Sigmoid colon (tissue), 7 donors: ENCODE measurements at regions of chr16 and their contacts with region 1.

Region 1: DNA sequence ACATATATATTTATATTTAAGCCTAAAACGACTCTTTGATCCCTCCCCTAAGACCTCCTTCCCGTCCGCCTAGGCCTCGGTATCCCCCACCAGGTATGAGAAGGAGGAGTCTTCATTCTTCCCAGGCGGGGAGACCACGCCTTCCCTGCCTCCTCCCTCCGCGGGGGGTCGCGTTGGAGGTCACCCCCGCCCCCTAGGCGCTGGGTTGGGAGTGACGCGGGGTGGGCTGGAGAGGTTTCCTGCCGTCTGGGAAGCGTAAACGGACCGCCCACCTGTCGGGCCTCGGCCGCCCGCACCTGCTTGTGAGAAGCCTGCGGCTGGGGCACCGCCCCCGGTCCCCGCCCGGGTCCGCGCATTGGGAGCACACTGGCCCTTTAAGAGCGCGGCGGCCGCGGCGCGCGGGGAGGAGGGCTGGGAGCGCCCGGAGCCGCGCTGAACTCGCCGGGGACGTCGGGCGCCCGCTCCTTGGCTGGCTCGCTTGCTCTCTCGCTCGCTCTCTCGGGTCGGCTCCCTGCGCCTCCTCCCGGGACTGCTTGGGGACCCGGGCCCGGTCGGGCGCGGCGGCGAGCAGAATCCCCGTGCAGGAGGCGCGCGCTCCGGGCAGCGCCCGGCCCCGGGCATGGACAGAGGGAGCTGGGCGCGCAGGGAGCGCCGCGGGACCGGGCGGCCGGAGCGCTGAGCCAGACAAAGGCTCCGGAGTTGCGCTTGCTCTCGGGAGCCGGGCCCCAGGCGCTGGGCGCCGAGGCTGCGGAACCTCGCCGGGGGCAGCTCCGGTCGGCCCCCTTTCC is at the start of gene MMP15:
- DNase-seq: peak; percentile 80
- H3K4me3 ChIP-seq: peak within 1 kb of the TSS; percentile 51 to 89 (median 70)
- H3K27ac ChIP-seq: peak within 1 kb of the TSS; percentile 86 to 91 (median 89)
- H3K4me1 ChIP-seq: peaks cover 1 to 74% (median 64%) of the 10 kb centered on the region in 4 donors
- H3K27me3 ChIP-seq: no peaks in the 10 kb centered on the region
- CTCF ChIP-seq: no peak
- EP300 ChIP-seq: no peak
- POLR2A ChIP-seq: no peak
- total RNA-seq, gene MMP15: 2.3 to 10.5 (median 5.1) TPM

Region 2: DNA sequence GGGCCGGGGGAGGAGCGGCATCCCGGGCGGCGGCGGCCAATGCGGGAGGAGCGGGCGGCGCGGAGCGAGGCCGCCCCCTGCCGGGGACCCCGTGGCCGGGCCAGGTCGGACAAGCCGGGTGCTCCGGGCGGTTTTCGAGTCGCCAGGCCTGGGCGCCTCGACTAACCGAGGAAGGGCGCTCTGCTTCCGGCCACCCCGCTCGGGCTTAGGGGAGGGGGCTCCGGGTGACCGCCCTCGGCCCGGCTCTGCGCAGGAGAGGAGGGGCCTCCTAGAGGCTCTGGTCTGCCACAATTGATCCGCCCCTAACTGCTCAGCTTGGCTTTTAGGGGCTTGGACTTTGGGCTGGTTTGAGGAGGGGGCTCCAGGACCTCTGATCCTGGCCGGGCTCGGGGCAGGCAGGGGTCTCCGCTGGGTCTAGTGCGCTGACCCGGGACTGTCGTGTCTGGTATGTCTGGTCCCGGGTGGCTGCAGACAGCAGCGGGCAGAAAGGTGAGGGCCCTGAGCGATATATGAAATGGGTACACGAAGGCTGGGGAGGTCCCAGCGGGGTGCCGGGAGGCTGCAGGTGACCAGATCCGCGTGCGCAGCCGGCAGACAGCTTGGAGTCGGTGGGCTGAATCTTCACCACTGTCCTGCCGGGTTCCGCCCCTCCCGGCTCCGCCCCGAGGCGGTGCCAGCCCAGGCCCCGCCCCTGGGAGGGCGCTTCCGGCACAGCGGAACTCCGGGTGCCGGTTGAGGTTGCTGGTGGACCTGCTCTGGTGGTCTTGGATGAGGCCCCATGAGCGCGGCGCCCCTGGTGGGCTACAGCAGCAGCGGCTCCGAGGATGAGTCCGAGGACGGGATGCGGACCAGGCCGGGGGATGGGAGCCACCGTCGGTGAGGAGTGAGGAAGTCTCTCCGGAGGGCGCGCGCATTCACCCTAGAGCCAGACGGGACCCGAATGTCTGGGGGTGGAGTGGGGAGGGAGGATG is 24.6 kb before region 1 on chr16 and contains the start of gene USB1:
- intact Hi-C with region 1: loop called (anchors 1 kb)
- DNase-seq: peak; percentile 92
- H3K4me3 ChIP-seq: peak within 1 kb of the TSS; percentile 48 to 91 (median 82)
- H3K27ac ChIP-seq: peak within 1 kb of the TSS; percentile 93 to 98 (median 96)
- H3K4me1 ChIP-seq: peaks cover 0 to 45% (median 30%) of the 10 kb centered on the region in 4 donors
- H3K27me3 ChIP-seq: no peaks in the 10 kb centered on the region
- CTCF ChIP-seq: peak in 3 of 4 experiments; percentile 22 to 63 (median 58)
- EP300 ChIP-seq: no peak
- POLR2A ChIP-seq: peak; percentile 69 to 79
- total RNA-seq, gene USB1: 19.9 to 44.9 (median 34.9) TPM

Region 3: GRCh38 chr16:58121132-58121531 is 95.6 kb after region 1 on chr16:
- intact Hi-C with region 1: loop called (anchors 2 kb)
- DNase-seq: no peak
- H3K4me3 ChIP-seq: no peak overlapping the region
- H3K27ac ChIP-seq: peak overlapping the region in 3 of 4 donors; percentile 19 to 67 (median 52)
- H3K4me1 ChIP-seq: peaks cover 0 to 94% (median 77%) of the 10 kb centered on the region in 4 donors
- H3K27me3 ChIP-seq: no peaks in the 10 kb centered on the region
- CTCF ChIP-seq: no peak
- EP300 ChIP-seq: no peak
- POLR2A ChIP-seq: no peak

Region 4: GRCh38 chr16:58129097-58129936 is 103.8 kb after region 1 on chr16 and contains the start of gene CFAP20:
- intact Hi-C with region 1: loop called (anchors 2 kb)
- DNase-seq: peak; percentile 99
- H3K4me3 ChIP-seq: peak within 1 kb of the TSS; percentile 73 to 92 (median 84)
- H3K27ac ChIP-seq: peak within 1 kb of the TSS; percentile 89 to 95 (median 92)
- H3K4me1 ChIP-seq: peaks cover 0 to 41% (median 39%) of the 10 kb centered on the region in 4 donors
- H3K27me3 ChIP-seq: no peaks in the 10 kb centered on the region
- CTCF ChIP-seq: no peak
- EP300 ChIP-seq: peak in 2 of 4 donors; percentile 52 to 73
- POLR2A ChIP-seq: peak; percentile 86 to 88
- total RNA-seq, gene CFAP20: 11.9 to 42.5 (median 26.6) TPM

Region 5: GRCh38 chr16:58198022-58198683 is 172.6 kb after region 1 on chr16 and contains the start of gene CSNK2A2:
- intact Hi-C with region 1: loop called (anchors 1 kb)
- DNase-seq: peak; percentile 79
- H3K4me3 ChIP-seq: peak within 1 kb of the TSS; percentile 67 to 92 (median 84)
- H3K27ac ChIP-seq: peak within 1 kb of the TSS; percentile 45 to 59 (median 57)
- H3K4me1 ChIP-seq: peaks cover 0 to 31% (median 18%) of the 10 kb centered on the region in 4 donors
- H3K27me3 ChIP-seq: no peaks in the 10 kb centered on the region
- CTCF ChIP-seq: peak in 1 of 4 experiments; percentile 24
- EP300 ChIP-seq: no peak
- POLR2A ChIP-seq: no peak
- total RNA-seq, gene CSNK2A2: 29.5 to 79.8 (median 33.0) TPM

Region 6: GRCh38 chr16:58249780-58250478 is 224.4 kb after region 1 on chr16:
- intact Hi-C with region 1: no loop called
- DNase-seq: peak; percentile 82
- H3K4me3 ChIP-seq: peak overlapping the region; percentile 46 to 70 (median 58)
- H3K27ac ChIP-seq: peak overlapping the region; percentile 39 to 67 (median 62)
- H3K4me1 ChIP-seq: peaks cover 0 to 16% (median 6%) of the 10 kb centered on the region in 4 donors
- H3K27me3 ChIP-seq: no peaks in the 10 kb centered on the region
- CTCF ChIP-seq: no peak
- EP300 ChIP-seq: no peak
- POLR2A ChIP-seq: no peak

Region 7: DNA sequence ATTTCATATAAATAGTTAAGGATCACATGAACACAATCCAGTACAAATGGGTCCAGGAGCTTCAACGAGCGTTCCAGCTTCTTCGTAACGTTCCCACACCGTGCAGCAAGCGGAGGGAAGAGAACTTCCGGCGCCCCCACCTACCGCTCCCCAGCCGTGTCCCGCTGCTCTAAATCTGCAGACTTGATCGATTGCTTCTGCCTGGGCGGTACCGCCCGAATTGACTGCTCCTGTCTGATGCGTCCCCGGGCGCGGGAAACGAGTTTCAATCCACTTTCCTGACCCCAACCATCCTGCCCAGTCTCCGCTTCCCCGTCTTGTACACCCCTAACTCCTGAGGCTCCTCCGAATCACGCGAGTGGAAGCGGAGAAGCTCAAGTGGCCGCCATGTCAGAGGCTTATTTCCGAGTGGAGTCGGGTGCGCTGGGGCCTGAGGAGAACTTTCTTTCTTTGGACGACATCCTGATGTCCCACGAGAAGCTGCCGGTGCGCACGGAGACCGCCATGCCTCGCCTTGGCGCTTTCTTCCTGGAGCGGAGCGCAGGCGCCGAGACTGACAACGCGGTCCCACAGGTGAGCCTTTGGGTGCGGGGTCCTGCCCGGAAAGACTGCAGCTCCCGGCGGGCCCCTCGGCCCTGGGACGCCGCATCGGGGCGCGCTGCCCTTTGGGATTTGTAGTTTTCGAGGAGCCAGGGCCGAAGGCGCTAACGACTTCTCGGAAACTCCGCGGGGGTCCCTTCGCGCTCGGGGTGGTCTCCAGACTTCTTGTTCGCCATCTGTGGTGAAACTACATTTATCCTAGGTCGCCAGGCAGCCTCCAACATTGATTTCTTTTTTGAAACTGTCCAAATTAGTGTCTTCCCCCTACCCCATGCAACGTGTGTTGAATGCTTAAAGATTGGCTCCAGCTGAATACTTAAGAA is 366.9 kb after region 1 on chr16 and contains the start of gene GINS3:
- intact Hi-C with region 1: loop called (anchors 10 kb)
- DNase-seq: peak; percentile 92
- H3K4me3 ChIP-seq: peak within 1 kb of the TSS; percentile 72 to 96 (median 82)
- H3K27ac ChIP-seq: peak within 1 kb of the TSS; percentile 81 to 87 (median 84)
- H3K4me1 ChIP-seq: peaks cover 0 to 7% (median 2%) of the 10 kb centered on the region in 4 donors
- H3K27me3 ChIP-seq: no peaks in the 10 kb centered on the region
- CTCF ChIP-seq: no peak
- EP300 ChIP-seq: no peak
- POLR2A ChIP-seq: no peak
- total RNA-seq, gene GINS3: 1.1 to 2.5 (median 2.4) TPM

Region 8: GRCh38 chr16:58487566-58488351 is 462.2 kb after region 1 on chr16:
- intact Hi-C with region 1: loop called (anchors 5 kb)
- DNase-seq: peak; percentile 88
- H3K4me3 ChIP-seq: peak overlapping the region in 3 of 4 donors; percentile 13 to 28 (median 26)
- H3K27ac ChIP-seq: no peak overlapping the region
- H3K4me1 ChIP-seq: peaks cover 0 to 9% (median 6%) of the 10 kb centered on the region in 4 donors
- H3K27me3 ChIP-seq: peaks cover 0 to 5% (median 0%) of the 10 kb centered on the region in 3 donors
- CTCF ChIP-seq: peak; percentile 78 to 90 (median 82)
- EP300 ChIP-seq: no peak
- POLR2A ChIP-seq: no peak